Activated B cell treated with CpG ODN at 0.5 μM for 24 hours (primary cell): ENCODE measurements at regions of chr6 and their contacts with region 1.

Region 1: DNA sequence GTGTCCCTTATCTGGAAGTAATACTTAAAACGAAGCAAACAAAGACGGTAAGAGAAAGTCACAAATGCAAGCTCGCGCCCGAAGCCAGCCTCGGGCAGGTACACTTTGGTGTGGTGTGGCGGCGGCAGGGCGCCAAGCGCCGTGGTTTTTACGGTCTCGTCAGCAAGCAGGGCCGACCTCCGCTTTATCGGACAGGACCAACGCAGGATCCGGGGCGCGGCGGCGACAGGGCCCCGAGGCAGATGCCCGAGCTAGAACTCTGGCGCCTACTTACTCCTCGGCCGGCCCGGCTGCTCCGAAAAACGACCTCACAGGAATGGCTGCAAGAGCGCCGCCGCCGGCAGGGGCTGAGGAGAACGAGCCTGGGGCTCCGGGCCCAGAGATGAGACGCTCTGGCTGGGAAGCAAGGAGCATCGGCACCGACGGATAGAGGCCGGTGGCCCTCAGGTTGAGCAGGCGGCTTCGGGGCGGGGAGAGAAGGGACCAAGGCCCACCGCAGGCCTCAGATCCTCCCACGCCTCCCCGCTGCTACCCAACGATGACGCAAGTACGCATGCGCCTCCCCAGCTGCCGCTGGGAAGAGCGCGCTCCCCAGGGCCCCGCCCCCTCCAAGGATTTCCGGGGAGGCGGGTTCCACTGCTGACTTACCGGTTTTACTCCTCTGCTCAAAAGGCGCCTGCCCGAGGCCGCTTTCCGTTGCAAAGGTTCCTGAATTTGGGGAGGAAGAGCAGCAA is 60.6 kb downstream of the FAM217A start:
- DNase-seq: peak; percentile 92
- ATAC-seq: peak; percentile 68
- H3K4me3 Mint-ChIP-seq: peak overlapping the region; percentile 95
- H3K27ac Mint-ChIP-seq: peak overlapping the region; percentile 99
- H3K4me1 Mint-ChIP-seq: peaks cover 68% of the 10 kb centered on the region
- H3K27me3 Mint-ChIP-seq: no peaks in the 10 kb centered on the region
- CTCF ChIP-seq: no peak

Region 2: DNA sequence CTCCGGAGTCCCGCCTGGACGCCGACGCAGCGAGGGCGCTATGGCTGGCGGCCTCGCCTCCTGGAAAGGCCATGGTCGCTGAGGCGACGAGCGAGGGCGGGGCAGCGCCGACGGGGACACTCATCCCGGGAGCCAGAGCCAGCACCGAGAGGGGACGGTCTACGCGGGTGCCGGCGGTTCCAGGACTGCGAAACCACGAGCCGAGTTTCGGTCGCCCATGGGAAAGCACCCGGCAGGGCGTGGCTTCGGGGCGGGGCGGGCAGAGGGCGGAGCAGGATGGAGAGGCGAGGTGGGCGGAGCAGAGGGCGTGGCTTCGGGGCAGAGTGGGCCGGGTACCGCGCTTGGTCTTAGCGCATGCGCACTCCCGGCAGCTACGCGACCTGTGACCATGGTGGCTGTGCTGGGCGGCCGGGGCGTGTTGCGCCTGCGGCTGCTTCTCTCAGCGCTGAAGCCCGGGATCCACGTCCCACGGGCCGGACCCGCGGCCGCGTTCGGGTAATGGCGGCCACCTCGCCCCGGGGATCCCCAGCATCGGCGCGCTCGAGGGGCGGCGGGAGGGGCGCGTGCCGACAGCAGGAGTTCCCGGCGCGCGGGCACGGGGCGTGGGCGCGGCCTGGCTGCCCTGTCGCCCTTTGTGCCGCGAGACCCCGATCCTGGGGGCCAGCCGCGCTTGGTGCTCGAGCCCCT is 899.8 kb before region 1 on chr6 and contains the start of gene BPHL:
- CTCF ChIA-PET with region 1: no interaction called
- POLR2A ChIA-PET with region 1: interaction called, 4 read pairs
- intact Hi-C with region 1: loop called (anchors 1 kb)
- DNase-seq: peak; percentile 100
- ATAC-seq: peak; percentile 92
- H3K4me3 Mint-ChIP-seq: peak within 1 kb of the TSS; percentile 89
- H3K27ac Mint-ChIP-seq: peak within 1 kb of the TSS; percentile 93
- H3K4me1 Mint-ChIP-seq: peaks cover 16% of the 10 kb centered on the region
- H3K27me3 Mint-ChIP-seq: no peaks in the 10 kb centered on the region
- CTCF ChIP-seq: no peak
- total RNA-seq, gene BPHL: 10.5 and 11.0 TPM in 2 replicates

Region 3: GRCh38 chr6:3356056-3356761 is 662.1 kb before region 1 on chr6:
- CTCF ChIA-PET with region 1: no interaction called
- POLR2A ChIA-PET with region 1: interaction called, 5 read pairs
- intact Hi-C with region 1: loop called (anchors 5 kb)
- DNase-seq: peak; percentile 70
- ATAC-seq: peak; percentile 97
- H3K4me3 Mint-ChIP-seq: peak overlapping the region; percentile 90
- H3K27ac Mint-ChIP-seq: peak overlapping the region; percentile 95
- H3K4me1 Mint-ChIP-seq: peaks cover 36% of the 10 kb centered on the region
- H3K27me3 Mint-ChIP-seq: no peaks in the 10 kb centered on the region
- CTCF ChIP-seq: no peak

Region 4: DNA sequence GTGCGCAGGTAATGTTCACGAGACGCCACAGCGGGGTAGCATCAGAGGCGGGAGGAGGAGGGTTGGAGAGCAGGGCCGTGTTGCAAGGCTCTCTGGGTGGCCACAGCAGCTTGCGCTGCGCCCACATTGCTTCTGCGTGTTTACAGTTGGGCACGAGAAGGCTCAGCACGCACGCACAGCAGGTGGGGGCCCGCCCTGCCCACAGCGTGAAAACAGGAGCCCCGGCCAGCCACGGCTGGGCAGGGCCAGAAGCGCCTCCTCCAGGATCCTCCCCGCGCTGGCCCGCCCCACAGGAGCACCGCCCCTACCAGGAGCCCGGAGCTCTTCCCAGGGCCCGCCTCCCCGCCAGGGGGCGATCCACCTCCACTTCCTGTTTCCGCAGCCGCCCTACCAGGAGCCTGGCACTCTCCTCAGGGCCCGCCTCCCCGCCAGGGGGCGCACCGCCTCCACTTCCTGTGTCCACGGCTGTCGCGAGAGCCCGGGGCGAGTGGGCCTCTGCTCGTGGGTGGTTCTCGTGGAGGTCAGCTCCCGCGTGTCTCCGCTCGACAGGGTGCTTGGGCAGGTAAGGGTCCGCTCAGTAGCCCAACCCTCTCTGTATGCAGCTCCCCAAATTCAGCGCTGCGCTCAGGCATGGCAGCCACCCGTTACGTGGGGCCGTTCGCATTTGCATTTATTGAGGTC is 169.3 kb before region 1 on chr6 and contains the start of gene FAM50B:
- CTCF ChIA-PET with region 1: interaction called, 5 read pairs
- POLR2A ChIA-PET with region 1: interaction called, 9 read pairs
- intact Hi-C with region 1: loop called (anchors 1 kb)
- DNase-seq: peak; percentile 86
- ATAC-seq: peak; percentile 95
- H3K4me3 Mint-ChIP-seq: peak within 1 kb of the TSS; percentile 80
- H3K27ac Mint-ChIP-seq: peak within 1 kb of the TSS; percentile 80
- H3K4me1 Mint-ChIP-seq: peaks cover 22% of the 10 kb centered on the region
- H3K27me3 Mint-ChIP-seq: no peaks in the 10 kb centered on the region
- CTCF ChIP-seq: peak; percentile 63
- total RNA-seq, gene FAM50B: 7.6 and 8.1 TPM in 2 replicates

Region 5: DNA sequence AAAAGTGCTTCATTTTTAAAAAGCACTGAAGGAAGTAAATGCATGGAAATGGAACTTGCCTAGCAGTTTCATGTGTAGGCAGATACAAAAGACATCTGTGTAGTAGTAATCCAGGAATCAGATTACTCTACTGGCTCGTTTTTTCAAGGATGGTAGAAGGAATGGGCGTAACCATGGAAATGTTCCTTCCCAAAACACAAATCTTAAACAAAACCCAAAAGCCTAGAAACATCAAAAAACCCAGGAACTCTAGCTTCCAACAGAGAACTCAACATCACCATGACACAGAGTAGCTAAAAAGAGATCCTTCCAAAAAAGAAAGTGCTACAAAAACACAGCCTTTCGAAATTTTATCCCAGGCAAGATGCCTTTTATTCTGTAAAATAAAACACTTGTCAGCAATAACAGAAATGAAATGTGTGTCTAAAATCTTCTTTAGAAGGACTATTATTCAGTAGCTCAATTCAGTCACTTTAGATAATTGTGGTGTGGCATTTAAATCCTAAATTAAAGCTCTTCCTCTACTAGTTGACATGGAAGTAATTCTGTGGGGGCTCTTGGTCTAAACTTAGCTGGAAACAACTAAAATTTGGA is 21.1 kb before region 1 on chr6:
- CTCF ChIA-PET with region 1: no interaction called
- POLR2A ChIA-PET with region 1: interaction called, 13 read pairs
- intact Hi-C with region 1: no loop called
- DNase-seq: no peak
- ATAC-seq: no peak
- H3K4me3 Mint-ChIP-seq: no peak overlapping the region
- H3K27ac Mint-ChIP-seq: no peak overlapping the region
- H3K4me1 Mint-ChIP-seq: peaks cover 2% of the 10 kb centered on the region
- H3K27me3 Mint-ChIP-seq: no peaks in the 10 kb centered on the region
- CTCF ChIP-seq: no peak

Region 6: DNA sequence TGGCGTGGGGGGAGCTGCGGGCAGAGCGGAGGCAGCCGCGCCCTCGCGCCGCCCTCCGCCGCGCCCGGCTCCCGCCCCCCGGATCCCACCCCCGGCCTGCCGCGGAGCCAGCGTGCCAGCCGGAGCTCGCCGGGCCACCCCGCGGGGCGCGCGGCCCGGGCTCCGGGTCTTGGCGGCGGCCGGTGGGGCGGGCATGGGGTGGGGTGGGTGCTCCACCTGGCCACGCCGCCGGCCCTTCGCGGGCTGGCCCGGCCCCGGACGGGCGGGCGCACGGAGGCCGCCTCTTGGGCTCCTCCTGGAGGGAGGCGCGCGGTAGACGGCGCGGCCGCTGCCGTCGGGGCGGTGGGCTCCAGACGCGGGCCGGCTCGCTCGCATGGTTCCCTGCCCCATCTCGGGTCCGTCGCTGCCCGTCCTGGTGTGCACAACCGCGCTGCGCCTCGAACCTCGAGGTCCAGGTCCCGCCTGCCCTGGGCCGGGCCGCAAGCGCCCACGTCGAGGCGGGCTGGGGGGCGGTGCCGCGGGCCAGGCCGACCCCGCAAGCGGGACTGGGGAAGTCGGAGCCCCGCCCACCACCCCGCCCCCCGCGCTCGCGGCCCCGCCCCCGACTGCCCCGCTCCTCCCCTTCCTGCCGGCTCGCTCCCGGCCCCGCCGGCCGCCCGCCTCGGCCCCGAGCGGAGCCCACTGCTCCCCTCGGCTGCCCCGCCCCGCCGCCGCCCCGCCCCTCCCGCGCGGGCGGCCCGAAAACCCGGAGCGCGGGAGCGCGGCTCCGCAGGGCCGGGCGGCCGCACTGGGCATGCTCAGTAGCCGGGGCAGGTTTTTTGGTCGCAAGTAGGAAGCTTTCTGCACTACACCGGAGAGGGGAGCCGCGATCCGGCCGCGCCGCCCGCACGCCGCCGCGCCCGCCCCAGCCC is 757.5 kb after region 1 on chr6 and contains the start of gene CDYL:
- CTCF ChIA-PET with region 1: no interaction called
- POLR2A ChIA-PET with region 1: interaction called, 3 read pairs
- intact Hi-C with region 1: loop called (anchors 2 kb)
- DNase-seq: peak; percentile 96
- ATAC-seq: peak; percentile 77
- H3K4me3 Mint-ChIP-seq: peak within 1 kb of the TSS; percentile 90
- H3K27ac Mint-ChIP-seq: peak within 1 kb of the TSS; percentile 85
- H3K4me1 Mint-ChIP-seq: peaks cover 46% of the 10 kb centered on the region
- H3K27me3 Mint-ChIP-seq: no peaks in the 10 kb centered on the region
- CTCF ChIP-seq: no peak
- total RNA-seq, gene CDYL: 47.5 and 49.8 TPM in 2 replicates